ENCODE measurements at regions of chrX and their contacts with region 1.

Region 1: GRCh38 chrX:102950908-102951866 is 14.1 kb downstream of the RAB40AL start:
- DNase-seq: peak in 2 of 5 donors; percentile 15 to 41
- ATAC-seq: peak in 3 of 4 donors; percentile 46 to 64 (median 50)
- H3K4me3 ChIP-seq: peak overlapping the region in 5 of 12 donors; percentile 5 to 29 (median 17)
- H3K27ac ChIP-seq: no peak overlapping the region
- H3K4me1 ChIP-seq: no peaks in the 10 kb centered on the region
- H3K27me3 ChIP-seq: no peaks in the 10 kb centered on the region
- CTCF ChIP-seq: peak; percentile 35 to 60 (median 52)
- POLR2A ChIP-seq: no peak

Region 2: DNA sequence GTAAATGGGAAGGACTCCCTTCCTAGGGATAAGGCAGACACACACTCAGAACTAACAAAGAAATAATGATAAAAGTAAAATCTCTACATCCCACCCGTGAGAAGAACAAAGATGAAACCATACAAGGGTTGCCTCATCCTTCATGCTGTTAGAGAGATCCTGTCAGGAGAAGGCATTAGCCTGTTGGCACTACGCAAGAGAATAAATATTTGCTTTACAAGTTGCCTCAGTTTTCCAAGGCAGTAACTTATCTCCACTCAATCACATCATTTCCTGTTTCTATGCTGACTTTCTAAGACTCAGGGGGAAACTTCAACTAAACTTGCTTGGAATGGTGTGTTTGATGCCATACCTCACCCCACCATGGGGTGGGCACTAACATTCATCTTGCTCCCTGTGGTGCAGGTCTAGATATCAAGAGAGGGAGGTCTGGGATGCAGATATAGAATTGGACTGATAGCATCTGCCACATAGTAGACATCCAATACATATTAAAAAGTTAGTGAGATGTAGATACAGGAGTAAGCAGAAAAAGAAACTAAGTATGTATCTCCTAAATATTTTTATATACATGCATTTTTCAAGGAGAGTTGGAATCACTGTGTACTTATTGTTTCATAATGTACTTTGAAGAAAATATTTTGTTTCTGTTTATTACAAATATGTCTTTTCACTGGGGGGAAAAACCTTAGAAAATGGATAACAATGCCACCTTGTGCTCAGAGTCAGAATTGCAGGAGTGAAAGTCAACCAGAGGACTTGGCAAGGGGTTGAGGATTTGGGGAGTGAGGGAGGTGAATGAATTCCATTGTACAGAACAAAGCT is 206.5 kb after region 1 on chrX:
- intact Hi-C with region 1: loop called in 5 of 10 experiments (anchors 2 to 10 kb)
- DNase-seq: no peak
- ATAC-seq: no peak
- H3K4me3 ChIP-seq: no peak overlapping the region
- H3K27ac ChIP-seq: no peak overlapping the region
- H3K4me1 ChIP-seq: no peaks in the 10 kb centered on the region
- H3K27me3 ChIP-seq: no peaks in the 10 kb centered on the region
- CTCF ChIP-seq: peak in 11 of 12 donors; percentile 39 to 60 (median 49)
- POLR2A ChIP-seq: no peak

Region 3: GRCh38 chrX:103170216-103170615 is 219.0 kb after region 1 on chrX:
- intact Hi-C with region 1: loop called in 6 of 10 experiments (anchors 5 kb)
- DNase-seq: no peak
- ATAC-seq: no peak
- H3K4me3 ChIP-seq: no peak overlapping the region
- H3K27ac ChIP-seq: no peak overlapping the region
- H3K4me1 ChIP-seq: no peaks in the 10 kb centered on the region
- H3K27me3 ChIP-seq: peaks cover 0 to 17% (median 0%) of the 10 kb centered on the region in 9 donors
- CTCF ChIP-seq: no peak
- POLR2A ChIP-seq: no peak

Region 4: DNA sequence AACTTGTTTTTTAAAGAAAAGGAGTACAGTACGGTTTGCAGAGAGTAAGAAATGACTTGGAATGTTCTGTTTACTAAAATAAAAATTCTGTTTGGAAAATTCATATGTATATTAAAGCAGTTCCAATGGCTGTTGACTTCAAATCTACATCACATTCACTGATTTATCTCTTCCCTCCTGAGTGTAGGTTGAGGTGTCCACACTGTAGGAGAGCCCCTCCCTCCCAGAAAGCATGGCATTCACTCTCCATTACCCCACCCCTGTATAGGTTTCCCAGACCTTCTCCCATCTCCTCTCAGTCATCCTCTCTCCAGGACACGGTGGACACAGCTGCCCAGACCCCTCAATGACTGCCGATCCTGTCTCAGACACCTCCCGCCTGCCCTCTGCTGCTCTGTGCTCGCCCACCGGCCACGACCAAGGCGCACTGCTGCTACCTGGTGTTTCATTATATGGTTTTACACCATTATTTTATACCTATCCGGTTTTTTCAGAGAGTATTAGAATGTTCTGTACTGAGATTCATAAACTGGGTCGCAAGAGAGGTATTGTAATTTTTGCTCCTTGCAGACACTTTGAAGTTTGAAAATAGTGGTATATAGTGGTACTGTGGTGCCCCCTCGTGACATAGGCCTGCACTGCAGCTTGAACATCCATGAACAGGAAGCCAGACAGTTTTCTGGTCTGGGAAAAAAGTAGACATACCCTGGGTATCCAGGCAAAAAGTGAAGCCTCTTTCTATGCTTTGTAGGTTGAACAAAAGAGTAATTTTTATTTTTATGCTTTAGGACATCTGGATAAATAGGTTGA is 225.0 kb after region 1 on chrX:
- intact Hi-C with region 1: loop called in 6 of 10 experiments (anchors 5 kb)
- DNase-seq: peak in 2 of 5 donors; percentile 7 to 21
- ATAC-seq: peak in 2 of 4 donors; percentile 51 to 64
- H3K4me3 ChIP-seq: no peak overlapping the region
- H3K27ac ChIP-seq: no peak overlapping the region
- H3K4me1 ChIP-seq: no peaks in the 10 kb centered on the region
- H3K27me3 ChIP-seq: peaks cover 0 to 49% (median 0%) of the 10 kb centered on the region in 9 donors
- CTCF ChIP-seq: peak; percentile 46 to 74 (median 66)
- POLR2A ChIP-seq: no peak